ENCODE measurements at regions of chr1 and their contacts with region 1.

Region 1: DNA sequence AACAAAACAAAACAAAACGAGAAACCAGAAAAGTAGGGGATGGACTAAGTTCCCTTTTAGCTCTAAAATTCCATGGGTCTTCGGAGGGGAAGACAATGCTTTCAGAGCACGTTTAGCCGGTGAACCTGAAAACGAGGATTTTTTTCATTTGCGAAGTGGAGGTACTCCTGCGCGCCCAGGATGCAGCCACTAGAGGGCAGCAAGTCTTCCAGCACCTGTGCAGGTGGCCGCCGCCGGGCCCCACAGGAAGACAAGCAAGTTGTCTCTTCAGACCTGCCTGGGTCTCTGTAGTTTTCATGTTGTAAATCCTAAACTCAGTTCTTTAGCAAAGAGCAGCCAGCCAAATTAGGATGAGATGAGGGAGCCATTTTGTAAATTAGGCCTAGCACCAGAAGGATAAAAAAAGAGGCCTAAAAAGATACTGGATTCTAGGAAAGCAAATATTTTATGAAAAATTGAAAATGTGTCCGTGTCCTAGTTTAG is 17.7 kb upstream of the SNX27 start:
- DNase-seq: peak; percentile 88 to 90
- H3K4me3 ChIP-seq: no peak overlapping the region
- H3K4me3 Mint-ChIP-seq: peak overlapping the region; percentile 69
- H3K27ac Mint-ChIP-seq: peak overlapping the region; percentile 74
- H3K4me1 ChIP-seq: peaks cover 18% of the 10 kb centered on the region
- H3K4me1 Mint-ChIP-seq: peaks cover 41% of the 10 kb centered on the region
- H3K27me3 ChIP-seq: no peaks in the 10 kb centered on the region
- H3K27me3 Mint-ChIP-seq: no peaks in the 10 kb centered on the region
- CTCF ChIP-seq: peak; percentile 92 to 95

Region 2: DNA sequence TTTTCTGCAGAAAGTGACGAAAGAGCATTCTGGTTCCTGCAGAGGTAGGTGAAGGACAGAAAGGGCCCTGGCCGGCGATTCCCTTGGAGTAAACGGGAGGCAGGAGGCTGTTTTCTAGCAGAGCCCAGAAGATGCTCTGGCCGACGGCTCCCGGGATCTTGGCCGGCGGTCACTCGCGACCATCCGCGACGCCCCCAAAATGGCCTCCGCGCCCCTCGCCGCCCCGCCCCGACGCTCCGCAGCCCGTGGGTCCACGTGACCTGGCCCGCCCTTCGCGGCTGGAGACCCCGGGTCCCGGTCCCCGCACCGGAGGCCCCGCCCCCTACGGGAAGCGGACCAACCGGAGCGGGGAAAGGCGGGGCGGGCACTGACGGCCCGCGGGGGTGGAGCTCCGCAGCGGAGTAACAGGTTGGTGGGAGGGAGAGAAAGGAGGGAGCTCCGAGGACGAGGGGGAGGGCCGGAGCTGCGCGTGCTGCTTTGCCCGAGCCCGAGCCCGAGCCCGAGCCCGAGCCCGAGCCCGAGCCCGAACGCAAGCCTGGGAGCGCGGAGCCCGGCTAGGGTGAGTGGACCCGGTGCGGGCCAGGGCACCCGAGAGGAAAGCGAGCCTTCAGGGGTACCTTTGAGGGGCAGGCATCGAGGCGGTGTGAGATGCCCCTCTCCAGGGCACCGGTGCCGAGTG is 83.1 kb before region 1 on chr1 and contains the start of gene CGN:
- CTCF ChIA-PET with region 1: no interaction called
- POLR2A ChIA-PET with region 1: no interaction called
- intact Hi-C with region 1: no loop called
- DNase-seq: peak; percentile 97 to 98
- H3K4me3 ChIP-seq: peak within 1 kb of the TSS; percentile 82
- H3K4me3 Mint-ChIP-seq: peak within 1 kb of the TSS; percentile 96
- H3K27ac Mint-ChIP-seq: peak within 1 kb of the TSS; percentile 94
- H3K4me1 ChIP-seq: peaks cover 33% of the 10 kb centered on the region
- H3K4me1 Mint-ChIP-seq: peaks cover 34% of the 10 kb centered on the region
- H3K27me3 ChIP-seq: no peaks in the 10 kb centered on the region
- H3K27me3 Mint-ChIP-seq: no peaks in the 10 kb centered on the region
- CTCF ChIP-seq: no peak
- total RNA-seq, gene CGN: 147 TPM in 2 replicates

Region 3: DNA sequence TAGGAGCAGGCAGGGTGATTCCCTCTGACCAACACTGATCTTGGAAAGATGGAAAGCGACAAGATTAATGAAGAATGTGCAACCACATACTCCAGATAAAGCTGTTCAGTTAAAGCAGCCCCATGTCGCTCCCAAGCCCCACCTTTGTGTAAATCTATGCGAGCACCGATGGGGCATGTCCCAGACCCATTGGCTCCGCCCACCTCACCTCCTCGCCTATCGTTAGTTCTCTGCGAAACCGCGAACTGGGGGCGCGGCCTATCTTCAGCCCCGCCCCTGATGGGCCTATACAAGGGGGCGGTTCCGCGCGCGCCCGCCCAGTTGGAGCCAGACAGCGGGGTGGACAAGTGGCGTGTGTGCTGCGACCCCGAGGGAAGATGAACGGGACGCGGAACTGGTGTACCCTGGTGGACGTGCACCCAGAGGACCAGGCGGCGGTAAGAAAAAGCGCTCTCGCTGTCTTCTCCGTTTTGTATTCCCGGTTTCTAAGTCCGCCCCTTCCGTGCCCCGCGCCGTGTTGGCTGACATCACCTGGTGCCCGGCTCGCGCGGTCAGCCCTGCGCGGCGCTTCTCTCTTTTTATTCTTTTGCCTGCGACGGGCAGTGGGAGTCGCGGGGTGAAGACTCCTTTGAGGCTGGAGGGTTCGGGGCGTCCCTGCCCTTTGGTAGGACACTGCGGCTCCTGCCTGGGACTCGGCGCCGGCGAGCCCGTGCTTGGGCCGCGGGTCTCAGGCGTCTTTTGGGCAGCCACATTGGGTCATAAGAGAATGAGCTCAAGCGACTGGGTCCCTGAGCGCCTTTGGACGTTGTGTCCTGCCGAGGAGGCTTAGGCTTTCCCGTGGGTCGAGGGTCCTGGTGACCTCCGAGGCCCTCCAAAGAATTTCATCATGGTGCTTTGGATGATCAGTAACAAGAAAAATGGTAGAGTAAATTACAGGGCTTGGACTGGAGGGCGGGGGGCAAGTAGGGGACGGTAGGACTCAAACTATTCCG is 53.9 kb before region 1 on chr1 and contains the start of gene TUFT1:
- CTCF ChIA-PET with region 1: interaction called, 12 read pairs
- POLR2A ChIA-PET with region 1: no interaction called
- intact Hi-C with region 1: loop called (anchors 5 kb)
- DNase-seq: peak; percentile 97
- H3K4me3 ChIP-seq: peak within 1 kb of the TSS; percentile 51
- H3K4me3 Mint-ChIP-seq: peak within 1 kb of the TSS; percentile 96
- H3K27ac Mint-ChIP-seq: peak within 1 kb of the TSS; percentile 91
- H3K4me1 ChIP-seq: peaks cover 22% of the 10 kb centered on the region
- H3K4me1 Mint-ChIP-seq: peaks cover 61% of the 10 kb centered on the region
- H3K27me3 ChIP-seq: no peaks in the 10 kb centered on the region
- H3K27me3 Mint-ChIP-seq: no peaks in the 10 kb centered on the region
- CTCF ChIP-seq: no peak
- total RNA-seq, gene TUFT1: 34.9 and 36.6 TPM in 2 replicates

Region 4: GRCh38 chr1:151611832-151612500 is 17.8 kb after region 1 on chr1 and contains the start of gene SNX27:
- CTCF ChIA-PET with region 1: interaction called, 3 read pairs
- POLR2A ChIA-PET with region 1: interaction called, 3 read pairs
- intact Hi-C with region 1: loop called (anchors 1 kb)
- DNase-seq: peak; percentile 92 to 95
- H3K4me3 ChIP-seq: peak within 1 kb of the TSS; percentile 98
- H3K4me3 Mint-ChIP-seq: peak within 1 kb of the TSS; percentile 98
- H3K27ac Mint-ChIP-seq: peak within 1 kb of the TSS; percentile 96
- H3K4me1 ChIP-seq: peaks cover 25% of the 10 kb centered on the region
- H3K4me1 Mint-ChIP-seq: peaks cover 45% of the 10 kb centered on the region
- H3K27me3 ChIP-seq: no peaks in the 10 kb centered on the region
- H3K27me3 Mint-ChIP-seq: no peaks in the 10 kb centered on the region
- CTCF ChIP-seq: no peak
- total RNA-seq, gene SNX27: 47.2 and 47.4 TPM in 2 replicates

Region 5: DNA sequence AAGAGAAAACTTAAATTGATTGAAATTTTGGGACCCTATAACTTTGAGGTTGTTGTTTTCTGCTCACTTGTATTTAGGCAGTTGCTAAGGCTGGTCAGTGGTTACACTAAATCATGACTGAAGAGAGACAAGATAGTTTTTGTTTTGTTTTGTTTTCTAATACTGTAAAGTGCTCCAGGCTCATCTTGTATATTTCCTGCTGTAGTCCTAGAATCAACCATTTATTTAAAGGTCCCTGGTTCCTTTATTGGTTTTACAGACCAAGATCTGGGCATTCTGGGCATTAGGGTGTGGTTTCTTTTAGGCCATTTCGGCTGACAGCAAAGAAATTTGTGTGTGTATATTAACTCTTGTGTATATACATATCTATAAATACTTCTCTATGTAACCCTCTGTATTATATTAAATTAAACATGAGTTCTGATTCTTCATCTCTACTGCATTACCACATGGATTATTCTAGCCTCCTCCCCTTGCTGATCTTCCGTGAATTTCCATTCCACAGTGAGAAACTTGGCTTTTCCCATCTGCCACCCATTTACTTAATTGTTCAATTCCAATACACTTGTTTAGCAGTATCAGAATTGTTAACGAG is 32.7 kb after region 1 on chr1:
- CTCF ChIA-PET with region 1: no interaction called
- POLR2A ChIA-PET with region 1: no interaction called
- intact Hi-C with region 1: no loop called
- DNase-seq: no peak
- H3K4me3 ChIP-seq: no peak overlapping the region
- H3K4me3 Mint-ChIP-seq: no peak overlapping the region
- H3K27ac Mint-ChIP-seq: no peak overlapping the region
- H3K4me1 ChIP-seq: no peaks in the 10 kb centered on the region
- H3K4me1 Mint-ChIP-seq: peaks cover 6% of the 10 kb centered on the region
- H3K27me3 ChIP-seq: no peaks in the 10 kb centered on the region
- H3K27me3 Mint-ChIP-seq: no peaks in the 10 kb centered on the region
- CTCF ChIP-seq: no peak

Region 6: DNA sequence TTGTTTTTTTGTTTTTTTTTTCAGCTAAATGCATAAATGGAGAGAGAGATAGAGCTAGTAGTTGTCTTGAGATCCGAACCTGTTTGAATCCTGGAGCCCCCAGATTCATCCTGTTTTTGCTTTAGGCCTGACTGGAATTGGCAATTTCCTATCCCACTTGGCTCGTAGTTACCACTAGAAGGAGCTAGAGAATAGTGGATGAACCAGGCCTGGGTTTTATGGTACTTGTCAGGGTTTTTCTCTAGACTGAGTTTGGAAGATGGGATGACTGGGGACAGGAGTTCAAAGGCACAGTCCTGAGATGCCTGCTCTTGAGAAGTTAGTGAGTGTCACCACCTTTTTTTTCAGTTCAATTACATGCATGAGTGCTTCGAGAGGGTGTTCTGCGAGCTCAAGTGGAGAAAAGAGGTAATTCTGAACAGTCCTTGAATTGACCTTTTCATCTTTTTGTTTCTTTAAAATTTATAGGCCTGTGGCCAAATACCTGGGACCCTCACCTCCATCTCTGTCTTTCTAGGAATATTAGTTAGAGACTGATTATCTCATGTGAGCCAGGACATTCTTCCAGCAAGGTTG is 99.0 kb after region 1 on chr1:
- CTCF ChIA-PET with region 1: no interaction called
- POLR2A ChIA-PET with region 1: no interaction called
- intact Hi-C with region 1: loop called (anchors 5 kb)
- DNase-seq: peak in 1 of 2 experiments; percentile 54
- H3K4me3 ChIP-seq: no peak overlapping the region
- H3K4me3 Mint-ChIP-seq: no peak overlapping the region
- H3K27ac Mint-ChIP-seq: no peak overlapping the region
- H3K4me1 ChIP-seq: no peaks in the 10 kb centered on the region
- H3K4me1 Mint-ChIP-seq: no peaks in the 10 kb centered on the region
- H3K27me3 ChIP-seq: no peaks in the 10 kb centered on the region
- H3K27me3 Mint-ChIP-seq: no peaks in the 10 kb centered on the region
- CTCF ChIP-seq: peak; percentile 60 to 90

Region 7: DNA sequence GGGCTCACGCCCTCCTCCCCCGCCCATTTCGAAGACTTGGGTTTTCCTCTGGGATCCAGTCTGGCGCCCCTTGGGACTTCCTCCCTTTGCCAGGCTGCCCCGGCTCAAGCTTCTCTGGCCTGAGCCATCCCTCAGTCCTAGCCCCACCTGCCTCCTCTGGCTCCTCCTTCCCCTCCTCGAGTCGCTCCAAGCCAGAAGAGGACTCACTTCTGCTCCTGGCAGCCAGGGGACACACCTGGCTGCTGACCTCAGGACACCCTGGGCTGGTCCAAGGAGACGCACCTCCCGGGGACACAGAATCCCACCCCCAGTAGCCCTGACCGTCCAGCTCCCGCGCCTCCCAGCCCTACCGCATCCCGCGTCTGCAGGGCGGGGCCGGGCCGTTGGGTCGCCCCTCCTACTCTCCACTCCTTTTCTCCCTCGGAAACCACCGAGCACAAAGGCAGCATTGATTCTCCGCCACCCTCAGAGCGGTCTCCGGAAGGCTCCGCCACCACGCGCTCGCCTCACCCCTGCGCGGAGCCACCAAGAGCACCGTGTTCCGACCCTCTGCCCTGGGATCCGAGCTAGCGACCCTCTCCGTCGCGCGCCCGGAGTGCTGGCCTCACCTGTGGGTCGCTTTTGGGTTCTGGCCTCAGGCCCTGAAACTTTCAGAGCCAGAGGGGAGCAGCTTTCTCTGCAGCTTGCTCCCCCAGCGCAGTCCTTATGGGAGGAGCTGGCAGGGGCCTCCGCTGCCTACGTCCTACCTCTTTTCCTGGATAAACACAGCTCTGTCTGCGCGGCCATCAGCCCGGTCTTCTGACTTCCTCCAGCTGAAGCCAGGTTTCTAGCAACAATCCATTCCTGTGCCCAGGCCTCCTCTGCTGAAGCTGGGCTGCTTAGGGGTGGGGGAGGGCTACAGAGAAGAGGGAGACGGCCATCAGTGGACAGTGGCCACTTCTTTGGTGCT is 245.5 kb after region 1 on chr1 and contains the start of gene C2CD4D:
- CTCF ChIA-PET with region 1: interaction called, 3 read pairs
- POLR2A ChIA-PET with region 1: no interaction called
- intact Hi-C with region 1: loop called (anchors 5 kb)
- DNase-seq: peak; percentile 76 to 82
- H3K4me3 ChIP-seq: peak within 1 kb of the TSS; percentile 57
- H3K4me3 Mint-ChIP-seq: peak within 1 kb of the TSS; percentile 93
- H3K27ac Mint-ChIP-seq: peak within 1 kb of the TSS; percentile 88
- H3K4me1 ChIP-seq: peaks cover 20% of the 10 kb centered on the region
- H3K4me1 Mint-ChIP-seq: peaks cover 26% of the 10 kb centered on the region
- H3K27me3 ChIP-seq: no peaks in the 10 kb centered on the region
- H3K27me3 Mint-ChIP-seq: no peaks in the 10 kb centered on the region
- CTCF ChIP-seq: no peak
- total RNA-seq, gene C2CD4D: 0.23 and 0.60 TPM in 2 replicates

Measured in Caco-2 (cell line).